T-cell (primary cell): ENCODE measurements at regions of chr5 and their contacts with region 1.

Region 1: DNA sequence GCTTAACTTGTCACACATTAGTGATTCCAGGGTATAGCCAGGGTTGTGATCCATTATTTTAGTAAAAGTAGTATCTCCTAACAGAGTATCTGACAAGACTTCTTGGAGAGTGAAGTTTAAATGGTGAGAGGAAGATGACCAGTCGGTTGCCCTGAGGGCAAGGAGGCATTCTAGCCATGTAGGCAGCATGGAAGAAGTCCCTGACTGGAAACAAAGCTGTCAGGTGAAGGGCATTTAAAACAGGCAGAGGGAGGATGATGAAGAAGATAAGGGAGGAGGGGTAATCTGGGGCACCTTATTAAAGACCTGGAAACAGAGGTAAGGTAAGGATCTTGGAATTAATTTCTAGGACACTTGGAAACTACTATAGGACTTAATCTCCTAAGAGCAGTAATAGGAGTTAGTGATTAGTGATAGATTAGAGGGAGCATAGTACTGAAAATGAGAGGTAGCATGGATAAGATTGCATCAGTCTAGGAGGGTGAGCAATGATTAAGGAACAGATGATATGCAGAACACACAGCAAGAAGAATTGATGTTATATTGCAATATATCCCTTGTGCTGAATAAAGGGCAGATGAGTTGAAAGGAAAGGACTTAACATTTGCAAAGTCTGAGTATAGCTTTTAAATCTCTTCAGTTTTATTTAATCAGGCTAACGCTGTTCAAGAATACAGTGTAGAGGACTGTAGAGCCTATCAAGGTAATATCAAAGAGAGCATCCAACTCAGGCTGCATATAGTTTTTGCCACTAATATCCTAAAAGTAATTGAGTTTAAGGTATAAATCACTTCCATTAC is 9.6 kb downstream of the KIF2A start:
- DNase-seq: no peak
- ATAC-seq: no peak
- H3K4me3 ChIP-seq: no peak overlapping the region
- H3K4me3 Mint-ChIP-seq: peak overlapping the region in 1 of 3 donors; percentile 33
- H3K27ac ChIP-seq: no peak overlapping the region
- H3K27ac Mint-ChIP-seq: peak overlapping the region in 1 of 2 donors; percentile 18
- H3K4me1 ChIP-seq: peaks cover 13 to 31% of the 10 kb centered on the region in 2 experiments
- H3K4me1 Mint-ChIP-seq: peaks cover 86 to 95% (median 86%) of the 10 kb centered on the region in 3 donors
- H3K27me3 ChIP-seq: no peaks in the 10 kb centered on the region
- H3K27me3 Mint-ChIP-seq: no peaks in the 10 kb centered on the region

Region 2: DNA sequence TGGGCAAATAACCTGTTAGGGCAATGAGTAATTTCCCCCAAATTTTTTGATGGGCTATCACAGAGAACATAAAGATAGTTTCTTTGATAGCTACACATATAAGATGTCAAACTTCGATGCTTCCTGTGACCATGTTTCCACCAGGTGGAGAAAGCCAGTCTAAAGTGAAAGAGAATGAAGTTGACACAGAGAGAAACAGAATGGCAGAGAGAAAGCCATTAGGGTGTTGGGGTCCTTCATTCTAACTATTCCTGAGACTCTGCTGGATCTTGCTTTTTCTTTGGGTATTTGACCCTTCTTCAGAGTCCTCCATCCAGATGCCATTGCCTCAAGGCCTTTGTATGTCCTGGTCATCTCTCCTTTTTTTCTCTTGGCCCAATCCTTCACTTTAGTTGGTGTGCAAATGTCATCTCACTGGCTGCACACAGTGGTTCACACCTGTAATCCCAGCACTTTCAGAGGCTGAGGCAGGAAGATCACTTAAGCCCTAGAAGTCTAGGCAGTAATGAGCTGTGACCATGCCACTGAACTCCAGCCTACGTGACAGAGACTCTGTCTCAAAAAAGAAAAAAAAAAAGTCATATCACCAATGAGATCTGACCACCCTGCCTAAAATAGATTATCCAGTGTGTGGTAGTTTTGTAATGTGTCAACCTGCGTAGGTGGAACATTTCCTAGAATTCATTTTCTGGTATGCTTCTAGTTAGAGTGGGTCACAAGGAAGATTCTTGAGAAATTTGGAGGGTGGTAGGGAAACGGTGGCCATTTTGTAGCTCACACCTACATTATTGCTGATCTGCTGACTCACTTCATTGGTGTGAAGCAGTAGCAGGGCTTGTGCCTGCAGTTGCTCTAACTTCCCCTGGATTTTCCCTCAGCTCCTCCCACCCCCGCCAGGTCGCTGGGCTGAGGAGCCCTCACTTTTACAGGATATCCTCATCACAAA is 30.4 kb before region 1 on chr5:
- CTCF ChIA-PET with region 1: no interaction called
- POLR2A ChIA-PET with region 1: interaction called in 1 of 2 experiments, 18 read pairs
- DNase-seq: peak in 3 of 35 experiments; percentile 5 to 45 (median 27)
- ATAC-seq: peak; percentile 45 to 66 (median 58)
- H3K4me3 ChIP-seq: no peak overlapping the region
- H3K4me3 Mint-ChIP-seq: peak overlapping the region in 1 of 3 donors; percentile 22
- H3K27ac ChIP-seq: peak overlapping the region; percentile 42
- H3K27ac Mint-ChIP-seq: peak overlapping the region; percentile 71 to 83
- H3K4me1 ChIP-seq: peaks cover 0 to 17% of the 10 kb centered on the region in 2 experiments
- H3K4me1 Mint-ChIP-seq: peaks cover 29 to 53% (median 36%) of the 10 kb centered on the region in 3 donors
- H3K27me3 ChIP-seq: no peaks in the 10 kb centered on the region
- H3K27me3 Mint-ChIP-seq: no peaks in the 10 kb centered on the region

Region 3: GRCh38 chr5:62348723-62349481 is 33.3 kb after region 1 on chr5:
- CTCF ChIA-PET with region 1: no interaction called
- POLR2A ChIA-PET with region 1: no interaction called
- DNase-seq: no peak
- ATAC-seq: no peak
- H3K4me3 ChIP-seq: no peak overlapping the region
- H3K4me3 Mint-ChIP-seq: no peak overlapping the region
- H3K27ac ChIP-seq: peak overlapping the region; percentile 23
- H3K27ac Mint-ChIP-seq: peak overlapping the region; percentile 67 to 82
- H3K4me1 ChIP-seq: peaks cover 2 to 8% of the 10 kb centered on the region in 2 experiments
- H3K4me1 Mint-ChIP-seq: peaks cover 8 to 27% (median 26%) of the 10 kb centered on the region in 3 donors
- H3K27me3 ChIP-seq: no peaks in the 10 kb centered on the region
- H3K27me3 Mint-ChIP-seq: no peaks in the 10 kb centered on the region